Activated B cell treated with CpG ODN at 0.5 μM for 24 hours (primary cell): ENCODE measurements at regions of chr1 and their contacts with region 1.

Region 1: DNA sequence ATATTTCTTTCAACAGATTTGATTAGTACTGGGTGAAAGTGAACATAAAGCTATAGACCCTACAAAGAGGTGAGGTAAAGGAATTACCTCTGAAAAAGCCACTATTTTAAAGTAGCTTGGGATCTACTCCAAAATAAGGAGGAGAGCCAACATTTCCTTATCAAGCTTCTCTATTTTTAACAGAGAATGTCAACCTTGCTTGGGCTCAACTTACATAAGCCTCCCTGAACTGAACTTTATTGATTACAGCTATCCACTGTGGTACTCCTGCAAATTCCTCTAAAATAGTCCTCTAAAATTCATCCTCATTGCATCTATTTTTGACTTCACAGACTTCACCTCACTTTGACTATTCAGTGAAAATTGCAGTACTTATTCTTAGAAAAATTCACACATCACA is 10.3 kb downstream of the ZNHIT6 start:
- DNase-seq: no peak
- ATAC-seq: no peak
- H3K4me3 Mint-ChIP-seq: no peak overlapping the region
- H3K27ac Mint-ChIP-seq: no peak overlapping the region
- H3K4me1 Mint-ChIP-seq: peaks cover 8% of the 10 kb centered on the region
- H3K27me3 Mint-ChIP-seq: no peaks in the 10 kb centered on the region
- CTCF ChIP-seq: no peak

Region 2: GRCh38 chr1:85683292-85684025 is 14.4 kb before region 1 on chr1:
- CTCF ChIA-PET with region 1: interaction called, 4 read pairs
- POLR2A ChIA-PET with region 1: no interaction called
- intact Hi-C with region 1: loop called (anchors 2 kb)
- DNase-seq: no peak
- ATAC-seq: no peak
- H3K4me3 Mint-ChIP-seq: no peak overlapping the region
- H3K27ac Mint-ChIP-seq: no peak overlapping the region
- H3K4me1 Mint-ChIP-seq: no peaks in the 10 kb centered on the region
- H3K27me3 Mint-ChIP-seq: no peaks in the 10 kb centered on the region
- CTCF ChIP-seq: no peak